OCI-LY7 (cell line): ENCODE measurements at regions of chr3 and their contacts with region 1.

Region 1: GRCh38 chr3:183548262-183548769 is 7.2 kb downstream of the KLHL6 start:
- DNase-seq: no peak
- H3K4me3 ChIP-seq: peak overlapping the region; percentile 97
- H3K27ac ChIP-seq: peak overlapping the region; percentile 96
- H3K4me1 ChIP-seq: peaks cover 82% of the 10 kb centered on the region
- CTCF ChIP-seq: no peak

Region 2: DNA sequence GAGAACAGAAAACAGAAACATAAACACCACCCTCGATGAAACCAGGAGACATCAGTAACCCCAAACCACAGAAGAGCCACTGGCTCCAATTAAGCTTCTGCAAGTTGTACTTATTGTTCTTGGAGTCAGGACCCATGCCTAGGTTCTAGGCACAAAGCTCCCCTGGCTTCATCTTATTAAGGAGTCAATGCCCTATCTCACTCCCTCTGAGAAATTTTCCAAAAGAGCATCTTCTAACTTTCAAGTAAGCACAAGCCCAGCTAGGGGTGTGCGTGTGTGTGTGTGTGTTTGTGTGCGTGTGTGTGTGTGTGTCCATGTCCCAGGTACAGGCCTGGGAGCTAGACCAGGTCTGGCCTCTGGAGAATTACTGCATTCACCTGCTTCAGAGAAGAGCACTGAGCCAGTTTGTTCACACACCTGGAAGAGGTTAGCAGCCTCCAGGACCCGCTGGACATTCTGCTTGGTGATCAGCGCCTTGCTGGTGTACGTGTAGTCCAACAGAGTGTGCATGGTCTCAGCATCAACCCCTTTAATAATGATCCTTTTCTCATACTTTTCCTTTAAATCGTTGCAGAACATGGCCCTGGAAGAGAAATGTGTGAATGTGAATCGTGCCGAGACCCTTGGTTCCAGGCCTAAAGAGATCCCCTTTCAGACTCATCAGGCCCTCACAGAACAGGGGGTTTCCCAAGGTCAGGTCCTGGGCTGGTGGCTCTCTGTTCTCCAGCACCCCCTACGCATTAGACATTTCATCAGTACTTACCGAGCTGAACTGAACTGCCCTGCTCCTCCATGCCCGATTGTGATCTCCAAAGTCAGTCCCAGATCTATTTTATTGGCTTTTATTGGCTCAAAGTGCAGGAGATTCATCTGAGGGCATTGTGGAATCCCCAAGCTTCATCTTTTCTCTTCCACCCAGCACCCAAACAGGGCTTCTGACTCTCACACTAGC is 20.6 kb before region 1 on chr3:
- CTCF ChIA-PET with region 1: no interaction called
- POLR2A ChIA-PET with region 1: interaction called, 10 read pairs
- intact Hi-C with region 1: no loop called
- DNase-seq: peak; percentile 60
- H3K4me3 ChIP-seq: peak overlapping the region; percentile 1
- H3K27ac ChIP-seq: peak overlapping the region; percentile 53
- H3K4me1 ChIP-seq: peaks cover 72% of the 10 kb centered on the region
- CTCF ChIP-seq: no peak

Region 3: DNA sequence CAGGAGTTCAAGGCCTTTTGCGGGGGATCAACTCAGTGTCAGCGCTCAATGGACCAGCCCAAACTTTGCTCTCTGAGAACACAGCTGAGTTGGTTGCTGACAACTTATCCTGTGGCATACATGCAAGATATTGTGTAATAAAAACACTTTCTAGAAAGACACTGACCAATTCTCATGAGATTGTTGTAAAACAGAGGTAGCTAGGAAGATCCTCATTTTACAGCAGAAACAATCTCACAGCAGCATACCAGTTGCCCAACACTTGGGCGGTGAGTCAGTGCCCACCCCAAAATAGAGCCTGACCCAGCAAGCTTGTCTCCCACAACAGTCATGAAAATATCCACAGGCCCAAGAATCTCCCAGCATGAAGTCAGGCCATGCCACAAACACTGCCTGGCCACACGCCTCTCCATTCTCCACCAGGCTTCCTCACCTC is 11.0 kb before region 1 on chr3:
- CTCF ChIA-PET with region 1: interaction called, 4 read pairs
- POLR2A ChIA-PET with region 1: interaction called, 19 read pairs
- intact Hi-C with region 1: no loop called
- DNase-seq: no peak
- H3K4me3 ChIP-seq: peak overlapping the region; percentile 57
- H3K27ac ChIP-seq: peak overlapping the region; percentile 74
- H3K4me1 ChIP-seq: peaks cover 98% of the 10 kb centered on the region
- CTCF ChIP-seq: no peak